Lower leg skin (tissue), 4 donors: ENCODE measurements at regions of chr11 and their contacts with region 1.

Region 1: GRCh38 chr11:22331771-22332170 is 6.4 kb upstream of the SLC17A6 start:
- DNase-seq: no peak
- H3K4me3 ChIP-seq: no peak overlapping the region
- CTCF ChIP-seq: no peak
- POLR2A ChIP-seq: no peak

Region 2: GRCh38 chr11:20451568-20451967 is 1880.2 kb before region 1 on chr11:
- intact Hi-C with region 1: loop called (anchors 10 kb)
- DNase-seq: no peak
- H3K4me3 ChIP-seq: no peak overlapping the region
- CTCF ChIP-seq: no peak
- POLR2A ChIP-seq: no peak

Region 3: GRCh38 chr11:20844630-20845029 is 1487.1 kb before region 1 on chr11:
- intact Hi-C with region 1: no loop called
- DNase-seq: no peak
- H3K4me3 ChIP-seq: no peak overlapping the region
- CTCF ChIP-seq: no peak
- POLR2A ChIP-seq: no peak

Region 4: GRCh38 chr11:22392561-22392960 is 60.8 kb after region 1 on chr11:
- intact Hi-C with region 1: no loop called
- DNase-seq: no peak
- H3K4me3 ChIP-seq: no peak overlapping the region
- CTCF ChIP-seq: no peak
- POLR2A ChIP-seq: no peak

Region 5: GRCh38 chr11:22432291-22433093 is 100.7 kb after region 1 on chr11:
- intact Hi-C with region 1: no loop called
- DNase-seq: peak in 1 of 2 donors; percentile 81
- H3K4me3 ChIP-seq: no peak overlapping the region
- CTCF ChIP-seq: no peak
- POLR2A ChIP-seq: no peak

Region 6: GRCh38 chr11:22792497-22792896 is 460.7 kb after region 1 on chr11:
- intact Hi-C with region 1: loop called (anchors 10 kb)
- DNase-seq: no peak
- H3K4me3 ChIP-seq: no peak overlapping the region
- CTCF ChIP-seq: no peak
- POLR2A ChIP-seq: no peak

Region 7: GRCh38 chr11:23846902-23847422 is 1515.2 kb after region 1 on chr11:
- intact Hi-C with region 1: no loop called
- DNase-seq: no peak
- H3K4me3 ChIP-seq: no peak overlapping the region
- CTCF ChIP-seq: no peak
- POLR2A ChIP-seq: no peak